IMR-90 (cell line): ENCODE measurements at regions of chr22 and their contacts with region 1.

Region 1: DNA sequence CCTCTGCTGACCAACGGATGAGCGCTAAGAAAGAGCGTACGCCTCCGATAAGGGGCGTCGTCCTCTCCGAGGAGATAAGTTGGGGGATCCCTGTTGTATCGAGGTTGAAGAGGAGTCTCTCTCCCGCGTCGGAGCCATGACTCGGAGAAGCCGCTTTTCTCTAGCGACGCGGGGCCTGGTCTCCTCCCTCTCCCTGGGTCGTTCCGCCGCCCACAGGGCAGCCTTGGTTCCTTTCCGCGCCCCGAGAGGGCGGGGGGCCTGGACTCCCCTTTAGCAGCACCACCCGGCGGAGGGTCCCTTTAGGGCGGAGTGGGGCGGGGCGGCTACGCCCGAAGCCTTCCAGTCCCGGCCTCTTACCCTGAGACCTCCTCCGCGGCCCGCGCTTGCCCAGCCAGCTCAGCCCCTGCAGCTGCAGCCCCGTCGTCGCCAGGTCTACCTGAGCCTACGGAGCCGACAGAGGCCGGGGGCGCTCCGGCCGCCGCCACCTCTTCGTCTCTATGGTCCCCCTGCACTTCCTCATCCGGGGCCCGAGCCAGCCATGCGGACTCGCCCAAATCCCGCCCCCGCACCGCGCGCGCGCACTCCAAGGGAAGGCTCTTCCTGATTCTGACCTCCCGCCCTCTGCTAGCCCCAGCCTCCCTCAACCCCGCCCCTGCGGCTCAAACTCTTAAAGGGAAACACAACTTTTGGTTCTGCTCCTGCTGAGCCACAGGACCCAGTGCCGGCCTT is at the start of gene PRR14L:
- DNase-seq: peak; percentile 90
- ATAC-seq: peak; percentile 86
- H3K4me3 ChIP-seq: peak within 1 kb of the TSS; percentile 73
- H3K27ac ChIP-seq: peak within 1 kb of the TSS; percentile 87
- H3K4me1 ChIP-seq: peaks cover 10% of the 10 kb centered on the region
- H3K27me3 ChIP-seq: no peaks in the 10 kb centered on the region
- CTCF ChIP-seq: peak; percentile 1; the same call in 1 of the 2 replicates
- POLR2A ChIP-seq: peak; percentile 85
- RAD21 ChIP-seq: peak; percentile 15; the same call in 1 of the 2 replicates
- total RNA-seq, gene PRR14L: 19.7 and 20.6 TPM in 2 replicates

Region 2: DNA sequence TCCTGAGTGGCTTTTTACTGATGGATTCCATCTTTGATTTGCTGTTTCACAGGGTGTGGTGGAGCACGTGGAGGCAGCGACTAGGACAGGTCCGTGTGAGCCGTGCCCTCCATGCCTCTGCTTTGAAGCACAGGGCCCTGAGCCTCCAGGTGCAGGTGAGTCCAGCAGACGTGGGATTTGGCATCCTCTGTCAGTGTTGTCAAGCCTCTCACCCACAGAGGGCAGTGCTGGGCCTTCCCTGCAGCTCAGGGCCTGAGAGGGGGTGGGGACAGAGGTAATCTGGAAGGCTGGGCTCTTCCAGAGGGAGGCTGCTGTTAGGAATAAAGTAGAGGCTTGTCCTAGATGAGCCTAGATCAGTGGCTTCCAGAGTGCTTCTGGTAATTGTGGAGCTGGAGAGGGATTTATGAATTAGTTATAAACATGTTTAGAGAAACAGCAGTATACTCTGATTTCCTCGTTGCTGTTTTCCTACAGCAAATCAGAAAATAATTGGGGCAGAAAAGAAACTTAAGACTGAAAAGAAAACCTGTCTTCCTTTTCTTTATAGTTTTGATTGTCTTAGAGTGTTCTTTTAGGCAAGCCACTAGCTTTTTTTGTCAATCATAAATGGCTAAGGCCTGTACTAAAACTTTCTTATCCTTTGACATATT is 188.4 kb before region 1 on chr22:
- CTCF ChIA-PET with region 1: interaction called, 3 read pairs
- POLR2A ChIA-PET with region 1: no interaction called
- dilution Hi-C with region 1: no loop called
- in situ Hi-C with region 1: no loop called
- intact Hi-C with region 1: loop called (anchors 5 kb)
- DNase-seq: peak; percentile 77
- ATAC-seq: peak; percentile 100
- H3K4me3 ChIP-seq: no peak overlapping the region
- H3K27ac ChIP-seq: no peak overlapping the region
- H3K4me1 ChIP-seq: no peaks in the 10 kb centered on the region; the same call in 1 of the 2 replicates
- H3K27me3 ChIP-seq: no peaks in the 10 kb centered on the region
- CTCF ChIP-seq: peak; percentile 86
- POLR2A ChIP-seq: 0 out of 2 replicates have a peak, but pooled peaks have one; percentile 20
- RAD21 ChIP-seq: peak; percentile 85

Region 3: DNA sequence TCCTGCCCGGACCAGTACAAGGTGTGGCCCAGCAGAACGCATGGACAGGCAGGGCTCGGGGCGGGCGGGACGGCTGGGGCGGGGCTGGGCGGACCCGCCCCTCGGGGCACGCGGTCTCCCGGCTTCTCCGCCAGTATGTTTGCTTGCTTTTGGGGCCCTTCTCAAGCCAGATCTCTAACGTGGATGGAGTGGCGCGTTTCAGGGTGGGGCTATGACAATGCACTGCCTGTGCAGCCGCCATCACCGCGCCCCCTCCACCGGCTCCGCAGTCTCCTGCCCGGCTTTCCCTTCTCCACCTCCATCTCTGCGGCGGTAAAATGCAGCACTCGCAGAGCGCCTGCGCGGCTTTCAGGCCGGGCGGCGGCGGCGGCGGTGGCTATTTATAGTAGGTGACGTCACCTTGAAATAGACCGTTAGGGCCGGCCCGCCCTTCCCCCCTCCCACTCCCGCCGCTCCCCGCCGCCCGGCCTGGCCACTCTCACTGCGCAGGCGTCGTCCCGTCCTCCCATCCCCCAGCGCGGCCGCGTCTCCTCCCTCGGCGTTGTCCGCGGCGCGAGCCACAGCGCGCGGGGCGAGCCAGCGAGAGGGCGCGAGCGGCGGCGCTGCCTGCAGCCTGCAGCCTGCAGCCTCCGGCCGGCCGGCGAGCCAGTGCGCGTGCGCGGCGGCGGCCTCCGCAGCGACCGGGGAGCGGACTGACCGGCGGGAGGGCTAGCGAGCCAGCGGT is 194.3 kb after region 1 on chr22 and contains the start of gene YWHAH:
- CTCF ChIA-PET with region 1: no interaction called
- POLR2A ChIA-PET with region 1: no interaction called
- dilution Hi-C with region 1: no loop called
- in situ Hi-C with region 1: loop called (anchors 10 kb)
- intact Hi-C with region 1: no loop called
- DNase-seq: peak; percentile 89
- ATAC-seq: peak; percentile 91
- H3K4me3 ChIP-seq: peak within 1 kb of the TSS; percentile 79
- H3K27ac ChIP-seq: peak within 1 kb of the TSS; percentile 94
- H3K4me1 ChIP-seq: peaks cover 11% of the 10 kb centered on the region
- H3K27me3 ChIP-seq: no peaks in the 10 kb centered on the region
- CTCF ChIP-seq: 0 out of 2 replicates have a peak, but pooled peaks have one; percentile 2
- POLR2A ChIP-seq: peak; percentile 97
- RAD21 ChIP-seq: no peak
- total RNA-seq, gene YWHAH: 173 and 186 TPM in 2 replicates

Region 4: GRCh38 chr22:31952459-31952858 is 202.7 kb after region 1 on chr22:
- CTCF ChIA-PET with region 1: no interaction called
- POLR2A ChIA-PET with region 1: no interaction called
- dilution Hi-C with region 1: no loop called
- in situ Hi-C with region 1: loop called (anchors 10 kb)
- intact Hi-C with region 1: loop called (anchors 5 kb)
- DNase-seq: peak; percentile 93
- ATAC-seq: peak; percentile 88
- H3K4me3 ChIP-seq: no peak overlapping the region
- H3K27ac ChIP-seq: no peak overlapping the region
- H3K4me1 ChIP-seq: peaks cover 12% of the 10 kb centered on the region
- H3K27me3 ChIP-seq: no peaks in the 10 kb centered on the region
- CTCF ChIP-seq: no peak
- POLR2A ChIP-seq: no peak
- RAD21 ChIP-seq: no peak